ENCODE measurements at regions of chr6 and their contacts with region 1.

Region 1: DNA sequence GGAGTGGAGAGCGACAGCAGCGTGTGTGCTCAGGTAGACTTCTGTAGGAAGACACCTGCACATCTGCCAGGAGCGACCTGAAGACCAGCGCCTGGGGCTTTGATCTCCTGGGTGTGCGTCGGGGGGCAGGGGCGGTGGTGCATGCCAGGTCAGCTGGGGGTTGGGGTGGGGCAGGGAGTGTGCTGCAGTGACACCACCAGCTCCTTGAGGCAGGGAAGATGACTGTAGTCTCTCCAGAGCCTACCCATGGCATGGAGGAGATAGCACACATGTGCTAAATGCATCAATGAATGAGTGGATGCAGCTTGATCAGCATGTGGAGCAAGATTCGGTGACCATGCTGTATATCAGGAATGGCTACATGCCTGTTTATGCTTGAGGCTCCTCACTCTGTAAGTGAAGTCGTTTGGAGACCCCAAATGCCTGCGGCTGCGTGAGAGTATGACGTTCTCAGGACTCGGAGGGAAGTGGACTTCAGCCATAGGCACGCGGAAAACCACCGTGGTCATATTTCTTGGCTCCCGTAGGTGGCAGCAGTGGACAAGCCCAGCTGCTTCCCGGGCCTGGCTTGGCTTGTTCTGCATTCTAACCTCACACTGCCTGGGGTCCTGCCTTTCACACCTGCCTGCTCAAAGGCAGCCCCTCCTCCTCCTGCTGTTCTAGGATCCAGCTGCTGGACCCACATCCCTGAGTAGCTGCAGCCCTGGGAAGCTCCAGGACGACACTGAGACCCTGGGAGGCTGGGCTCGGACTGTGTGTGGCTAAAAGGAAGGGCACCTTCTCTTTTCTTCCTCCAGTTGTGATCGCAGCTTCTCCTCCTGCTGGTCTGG is 39.4 kb upstream of the KCNK16 start:
- DNase-seq: peak; percentile 64 to 87 (median 84)
- H3K4me3 ChIP-seq: peak overlapping the region in 1 of 7 experiments; percentile 6
- H3K27ac ChIP-seq: no peak overlapping the region
- H3K4me1 ChIP-seq: peaks cover 0 to 12% (median 10%) of the 10 kb centered on the region in 4 experiments
- H3K27me3 ChIP-seq: peaks cover 0 to 4% (median 0%) of the 10 kb centered on the region in 5 experiments

Region 2: GRCh38 chr6:38982470-38982869 is 379.4 kb before region 1 on chr6:
- CTCF ChIA-PET with region 1: no interaction called
- POLR2A ChIA-PET with region 1: no interaction called
- DNase-seq: no peak
- H3K4me3 ChIP-seq: no peak overlapping the region
- H3K27ac ChIP-seq: no peak overlapping the region
- H3K4me1 ChIP-seq: no peaks in the 10 kb centered on the region
- H3K27me3 ChIP-seq: peaks cover 4 to 44% (median 12%) of the 10 kb centered on the region in 5 experiments

Region 3: DNA sequence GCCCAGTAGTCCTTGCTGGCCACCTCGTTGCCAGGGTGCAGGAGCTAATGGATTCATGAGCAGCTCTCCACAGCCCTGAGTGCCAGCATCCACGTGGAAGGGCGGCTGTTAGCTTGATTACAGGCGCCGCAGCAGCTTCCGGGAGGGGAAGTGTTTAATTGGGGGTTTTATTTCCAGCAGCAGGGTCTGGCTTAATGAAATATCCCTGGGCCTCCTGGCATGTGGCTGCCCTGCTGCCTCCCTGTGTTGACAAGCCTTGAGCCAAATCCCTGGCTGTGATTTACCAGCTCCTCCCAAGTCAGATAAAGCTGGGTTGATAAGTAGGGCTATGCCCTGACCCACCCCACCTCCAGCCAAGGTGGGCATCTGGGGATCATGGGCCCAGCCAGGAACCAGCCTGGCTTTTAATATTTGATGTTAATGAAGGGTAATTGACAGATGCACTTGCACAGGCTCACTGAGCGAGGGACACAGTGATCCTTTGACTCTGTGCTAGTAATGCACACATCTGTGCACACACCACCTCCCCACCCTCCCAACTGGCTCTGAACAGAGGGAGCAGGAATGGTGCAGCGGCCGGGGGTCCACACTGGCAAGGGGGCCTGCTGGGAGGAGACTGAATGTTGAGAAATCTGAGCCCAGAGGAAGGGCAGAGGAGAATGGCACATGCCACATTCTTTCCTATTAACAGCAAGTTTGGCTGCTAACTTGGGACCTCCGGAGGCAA is 299.7 kb before region 1 on chr6:
- CTCF ChIA-PET with region 1: no interaction called
- POLR2A ChIA-PET with region 1: no interaction called
- DNase-seq: no peak
- H3K4me3 ChIP-seq: no peak overlapping the region
- H3K27ac ChIP-seq: no peak overlapping the region
- H3K4me1 ChIP-seq: no peaks in the 10 kb centered on the region
- H3K27me3 ChIP-seq: peaks cover 0 to 74% (median 10%) of the 10 kb centered on the region in 5 experiments

Region 4: GRCh38 chr6:39347906-39348585 is 13.8 kb before region 1 on chr6:
- CTCF ChIA-PET with region 1: interaction called, 10 read pairs
- POLR2A ChIA-PET with region 1: interaction called, 3 read pairs
- DNase-seq: peak; percentile 47 to 72 (median 55)
- H3K4me3 ChIP-seq: no peak overlapping the region
- H3K27ac ChIP-seq: no peak overlapping the region
- H3K4me1 ChIP-seq: peaks cover 0 to 14% (median 8%) of the 10 kb centered on the region in 4 experiments
- H3K27me3 ChIP-seq: no peaks in the 10 kb centered on the region

Region 5: GRCh38 chr6:39892490-39893129 is 530.7 kb after region 1 on chr6:
- CTCF ChIA-PET with region 1: interaction called, 10 read pairs
- POLR2A ChIA-PET with region 1: no interaction called
- DNase-seq: peak; percentile 18 to 49 (median 37)
- H3K4me3 ChIP-seq: no peak overlapping the region
- H3K27ac ChIP-seq: no peak overlapping the region
- H3K4me1 ChIP-seq: no peaks in the 10 kb centered on the region
- H3K27me3 ChIP-seq: peaks cover 0 to 30% (median 18%) of the 10 kb centered on the region in 5 experiments